PC-3 (cell line): ENCODE measurements at regions of chr4 and their contacts with region 1.

Region 1: DNA sequence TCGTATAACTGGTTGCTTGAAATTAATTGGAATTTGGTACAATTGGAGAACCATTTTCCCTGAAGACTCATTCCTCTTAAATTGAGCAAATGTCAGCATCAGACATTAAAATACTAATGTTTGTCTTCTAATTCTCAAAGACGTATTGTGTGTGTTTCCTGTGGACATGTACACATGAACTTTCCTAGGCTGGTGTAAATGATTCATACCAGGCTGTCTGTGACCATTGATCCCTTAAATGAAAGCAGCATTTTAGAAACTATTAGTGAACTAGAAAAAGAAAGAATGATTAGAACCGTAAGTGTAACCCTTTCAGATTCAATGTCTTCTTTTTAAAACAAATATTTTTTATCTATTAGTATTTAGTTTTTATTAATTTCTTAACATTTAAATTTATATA is 332.9 kb downstream of the PPP3CA start:
- DNase-seq: no peak
- ATAC-seq: no peak
- H3K4me3 ChIP-seq: no peak overlapping the region
- H3K27ac ChIP-seq: no peak overlapping the region
- H3K4me1 ChIP-seq: peaks cover 3% of the 10 kb centered on the region
- H3K27me3 ChIP-seq: no peaks in the 10 kb centered on the region
- CTCF ChIP-seq: no peak

Region 2: GRCh38 chr4:99352602-99353537 is 1661.5 kb before region 1 on chr4 and contains the start of gene ADH1C:
- CTCF ChIA-PET with region 1: no interaction called
- POLR2A ChIA-PET with region 1: no interaction called
- intact Hi-C with region 1: no loop called
- DNase-seq: no peak
- ATAC-seq: no peak
- H3K4me3 ChIP-seq: no peak within 1 kb of the TSS
- H3K27ac ChIP-seq: no peak within 1 kb of the TSS
- H3K4me1 ChIP-seq: no peaks in the 10 kb centered on the region
- H3K27me3 ChIP-seq: no peaks in the 10 kb centered on the region
- CTCF ChIP-seq: no peak
- total RNA-seq, gene ADH1C: not detected in 2 replicates

Region 3: GRCh38 chr4:100372432-100372831 is 642.0 kb before region 1 on chr4:
- CTCF ChIA-PET with region 1: no interaction called
- POLR2A ChIA-PET with region 1: no interaction called
- intact Hi-C with region 1: no loop called
- DNase-seq: peak; percentile 30
- ATAC-seq: no peak
- H3K4me3 ChIP-seq: no peak overlapping the region
- H3K27ac ChIP-seq: no peak overlapping the region
- H3K4me1 ChIP-seq: no peaks in the 10 kb centered on the region
- H3K27me3 ChIP-seq: no peaks in the 10 kb centered on the region
- CTCF ChIP-seq: peak; percentile 59

Region 4: DNA sequence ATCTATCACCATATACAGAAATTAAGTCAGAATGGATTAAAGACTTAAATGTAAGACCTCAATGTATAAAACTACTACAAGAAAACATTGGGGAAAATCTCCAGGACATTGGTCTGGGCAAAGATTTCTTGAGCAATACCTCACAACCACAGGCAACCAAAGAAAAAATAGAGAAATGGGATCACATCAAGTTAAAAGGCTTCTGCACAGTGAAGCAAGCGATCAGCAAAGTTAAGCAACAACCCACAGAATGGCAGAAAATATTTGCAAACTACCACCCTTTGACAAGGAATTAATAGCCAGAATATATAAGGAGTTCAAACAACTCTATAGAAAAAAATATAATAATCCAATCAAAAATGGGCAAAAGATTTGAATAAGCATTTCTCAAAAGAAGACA is 259.7 kb before region 1 on chr4:
- CTCF ChIA-PET with region 1: no interaction called
- POLR2A ChIA-PET with region 1: no interaction called
- intact Hi-C with region 1: no loop called
- DNase-seq: no peak
- ATAC-seq: no peak
- H3K4me3 ChIP-seq: no peak overlapping the region
- H3K27ac ChIP-seq: no peak overlapping the region
- H3K4me1 ChIP-seq: no peaks in the 10 kb centered on the region
- H3K27me3 ChIP-seq: no peaks in the 10 kb centered on the region
- CTCF ChIP-seq: no peak

Region 5: DNA sequence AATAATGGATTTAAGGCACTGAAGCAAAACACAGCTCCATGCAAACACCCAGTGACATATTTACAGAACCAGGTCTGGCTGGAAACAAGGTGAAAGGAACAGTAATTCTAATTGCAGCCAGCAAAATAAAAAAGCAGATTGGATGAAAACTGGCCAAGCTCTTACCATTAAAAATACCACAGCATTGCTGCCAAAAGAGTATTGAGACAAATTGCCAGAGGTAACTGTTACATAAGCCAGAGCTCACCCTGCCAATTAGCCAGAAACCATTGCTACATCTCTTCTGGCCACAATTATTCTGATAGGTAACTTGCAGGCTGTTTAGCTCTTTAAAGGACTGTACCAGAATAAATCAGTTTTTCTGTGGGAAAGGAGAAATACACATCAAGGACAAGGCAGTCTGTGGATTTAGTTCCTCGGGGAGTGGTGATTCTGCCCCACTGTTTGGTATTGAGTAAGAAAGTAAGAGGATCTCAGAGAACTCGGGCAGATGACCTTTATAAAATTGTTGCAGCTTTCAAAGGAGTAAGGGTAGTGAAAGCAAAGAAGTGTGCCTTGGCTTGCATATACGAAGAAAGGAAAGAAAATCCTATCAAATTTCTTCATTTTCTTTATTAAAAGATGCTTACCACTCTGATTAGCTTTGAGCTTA is 36.5 kb before region 1 on chr4:
- CTCF ChIA-PET with region 1: no interaction called
- POLR2A ChIA-PET with region 1: interaction called, 12 read pairs
- intact Hi-C with region 1: no loop called
- DNase-seq: no peak
- ATAC-seq: no peak
- H3K4me3 ChIP-seq: no peak overlapping the region
- H3K27ac ChIP-seq: no peak overlapping the region
- H3K4me1 ChIP-seq: no peaks in the 10 kb centered on the region
- H3K27me3 ChIP-seq: no peaks in the 10 kb centered on the region
- CTCF ChIP-seq: no peak